Activated CD8-positive, alpha-beta T cell treated with anti-CD3 and anti-CD28 coated beads, Interleukin-2, amount 10 ng/mL, durations not matched to agents 7 days and 5 days (primary cell): ENCODE measurements at regions of chr19 and their contacts with region 1.

Region 1: DNA sequence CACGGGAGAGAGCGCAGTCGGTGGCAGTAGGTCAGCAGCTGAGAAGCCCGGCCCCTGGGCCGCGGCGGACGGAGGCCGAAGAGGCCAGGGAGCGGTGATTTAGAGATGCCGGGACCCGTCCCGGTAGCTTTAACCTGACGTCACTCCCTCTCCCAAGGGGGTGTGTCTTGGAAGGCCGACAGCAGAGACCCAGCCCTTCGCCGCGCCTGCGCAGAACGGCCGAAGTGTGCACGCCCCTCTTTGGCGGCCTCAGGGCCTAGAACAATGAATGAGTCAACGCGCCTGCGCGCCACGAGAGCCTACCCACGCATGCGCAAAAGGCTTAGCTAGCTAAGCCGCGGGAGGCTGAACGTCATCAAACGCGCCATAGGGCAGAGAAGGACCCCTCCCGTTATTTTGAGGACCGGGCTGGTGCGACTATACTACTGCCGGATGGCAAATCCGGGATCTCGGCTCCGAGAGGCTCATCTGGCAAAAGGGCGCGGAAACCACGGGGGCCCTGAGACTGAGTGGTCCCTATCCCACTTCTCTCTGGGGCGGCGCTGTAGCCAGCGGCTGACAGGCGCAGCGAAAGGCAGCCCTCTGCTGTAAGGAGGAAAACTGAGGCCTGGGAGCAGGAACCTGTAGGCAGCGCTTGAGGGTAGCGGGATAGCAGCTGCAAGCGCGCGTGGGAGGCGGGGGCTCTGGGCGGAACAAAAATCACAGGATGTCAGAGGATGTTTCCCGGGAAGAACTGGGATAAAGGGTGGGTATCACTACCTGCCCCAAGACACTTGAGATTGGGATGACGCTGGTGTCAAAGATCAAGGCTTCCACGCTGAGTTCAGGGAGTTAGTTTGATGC is at the starts of genes IRGQ and ZNF576:
- DNase-seq: peak; percentile 100
- ATAC-seq: peak; percentile 82
- H3K4me3 Mint-ChIP-seq: peak within 1 kb of the TSS; percentile 98
- H3K27ac Mint-ChIP-seq: peak within 1 kb of the TSS; percentile 99
- H3K4me1 Mint-ChIP-seq: peaks cover 37% of the 10 kb centered on the region
- H3K27me3 Mint-ChIP-seq: no peaks in the 10 kb centered on the region
- total RNA-seq, gene IRGQ: 11.2 to 14.0 TPM
- total RNA-seq, gene ZNF576: 14.1 to 17.3 TPM

Region 2: DNA sequence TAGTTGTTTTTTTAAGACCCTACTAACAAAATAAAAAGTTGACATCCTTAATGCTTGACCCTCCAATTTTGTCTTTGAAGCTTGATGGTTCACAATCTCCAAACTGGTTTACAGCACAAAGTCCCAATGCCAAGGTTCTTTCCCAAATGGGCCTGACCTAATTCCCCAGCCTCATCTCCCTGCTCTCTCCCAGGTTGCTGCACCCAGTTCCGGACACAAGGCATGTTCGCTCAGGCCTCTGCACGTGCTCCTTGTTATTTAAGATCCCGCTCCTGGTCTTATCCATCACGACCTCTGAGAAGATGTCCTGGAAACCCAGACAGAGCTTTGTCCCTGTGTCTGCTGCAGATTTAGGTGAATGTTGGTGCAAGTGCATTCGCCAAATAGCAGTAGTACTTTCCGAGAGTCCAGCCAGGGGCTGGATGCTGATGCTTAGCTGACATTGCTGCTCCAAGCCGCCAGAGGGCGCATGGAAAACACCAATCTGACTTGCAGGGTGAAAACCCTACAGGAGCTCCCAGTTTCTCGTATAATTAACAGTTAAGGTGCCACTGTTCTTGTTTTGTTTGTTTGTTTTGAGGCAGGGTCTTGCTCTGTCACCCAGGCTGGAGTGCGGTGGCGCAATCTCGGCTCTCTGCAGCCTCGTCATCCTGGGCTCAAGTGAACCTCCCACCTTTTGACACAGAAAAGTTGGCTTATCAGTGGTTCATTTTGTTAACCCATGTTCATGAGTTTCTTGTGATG is 149.3 kb before region 1 on chr19:
- CTCF ChIA-PET with region 1: interaction called, 50 read pairs
- POLR2A ChIA-PET with region 1: interaction called, 5 read pairs
- DNase-seq: peak; percentile 85
- ATAC-seq: peak; percentile 88
- H3K4me3 Mint-ChIP-seq: no peak overlapping the region
- H3K27ac Mint-ChIP-seq: peak overlapping the region; percentile 18
- H3K4me1 Mint-ChIP-seq: peaks cover 25% of the 10 kb centered on the region
- H3K27me3 Mint-ChIP-seq: no peaks in the 10 kb centered on the region

Region 3: DNA sequence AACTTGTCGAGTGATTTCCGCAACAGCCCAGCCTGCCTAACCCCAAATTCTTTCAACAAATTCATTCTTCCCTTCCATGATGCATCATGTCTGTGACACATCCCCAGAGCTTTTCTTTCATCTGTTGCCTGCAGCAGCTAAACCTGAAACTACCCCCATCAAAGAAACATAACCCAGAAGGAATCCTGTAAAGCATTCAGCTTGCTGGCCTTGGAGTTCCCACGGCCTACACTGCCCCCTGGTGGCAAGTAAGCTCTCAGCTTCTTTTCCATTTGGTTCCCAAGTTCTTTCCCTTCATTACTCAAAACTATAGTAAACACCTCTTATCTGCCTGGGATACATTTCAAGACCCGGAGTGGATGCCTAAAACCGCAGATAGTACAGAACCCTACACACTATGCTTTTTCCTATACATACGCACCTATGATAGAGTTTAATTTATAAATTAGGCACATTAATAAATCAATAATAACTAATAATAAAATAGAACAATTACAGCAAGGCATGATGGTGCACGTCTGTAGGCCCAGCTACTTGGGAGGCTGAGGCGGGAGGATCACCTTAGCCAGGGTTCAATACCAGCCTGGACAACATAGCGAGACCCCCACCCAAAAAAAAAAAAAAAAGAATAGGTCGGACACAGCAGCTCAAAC is 76.7 kb before region 1 on chr19:
- CTCF ChIA-PET with region 1: interaction called, 32 read pairs
- POLR2A ChIA-PET with region 1: interaction called, 4 read pairs
- DNase-seq: peak; percentile 83
- ATAC-seq: peak; percentile 71
- H3K4me3 Mint-ChIP-seq: no peak overlapping the region
- H3K27ac Mint-ChIP-seq: peak overlapping the region; percentile 7
- H3K4me1 Mint-ChIP-seq: peaks cover 14% of the 10 kb centered on the region
- H3K27me3 Mint-ChIP-seq: no peaks in the 10 kb centered on the region

Region 4: DNA sequence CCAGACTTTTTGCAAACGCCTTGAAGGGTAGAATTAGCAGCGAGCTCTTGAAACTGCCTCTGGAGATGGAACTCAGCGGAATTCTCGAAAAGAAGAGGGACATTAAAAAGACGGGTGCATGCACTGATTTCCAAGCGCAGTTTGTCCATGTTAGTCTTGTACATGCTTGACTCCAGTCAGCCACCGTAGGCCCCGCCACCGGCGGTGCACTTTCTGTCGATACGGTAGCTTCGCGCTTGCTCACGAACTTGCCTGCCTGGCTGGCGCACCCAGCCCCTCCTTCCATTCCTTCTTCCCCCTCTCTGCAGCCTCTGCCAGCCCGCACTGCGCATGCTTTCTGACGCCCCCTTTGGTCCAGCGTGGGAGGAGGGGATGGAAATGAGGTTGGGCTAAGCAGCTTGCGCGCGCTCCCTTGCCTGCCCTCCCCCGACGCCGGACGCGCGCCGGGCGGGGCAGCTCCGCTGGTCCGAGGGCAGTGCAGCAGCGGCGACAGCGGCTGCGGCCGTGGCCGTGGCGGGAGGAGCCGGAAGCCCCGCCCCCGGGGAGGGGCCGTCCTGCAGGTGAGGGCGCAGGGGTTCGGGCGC is 63.2 kb before region 1 on chr19 and contains the start of gene ZNF575:
- CTCF ChIA-PET with region 1: interaction called, 88 read pairs
- POLR2A ChIA-PET with region 1: interaction called, 13 read pairs
- DNase-seq: peak; percentile 91
- ATAC-seq: peak; percentile 66
- H3K4me3 Mint-ChIP-seq: peak within 1 kb of the TSS; percentile 87
- H3K27ac Mint-ChIP-seq: peak within 1 kb of the TSS; percentile 98
- H3K4me1 Mint-ChIP-seq: peaks cover 27% of the 10 kb centered on the region
- H3K27me3 Mint-ChIP-seq: no peaks in the 10 kb centered on the region
- total RNA-seq, gene ZNF575: 3.4 to 3.7 TPM

Region 5: DNA sequence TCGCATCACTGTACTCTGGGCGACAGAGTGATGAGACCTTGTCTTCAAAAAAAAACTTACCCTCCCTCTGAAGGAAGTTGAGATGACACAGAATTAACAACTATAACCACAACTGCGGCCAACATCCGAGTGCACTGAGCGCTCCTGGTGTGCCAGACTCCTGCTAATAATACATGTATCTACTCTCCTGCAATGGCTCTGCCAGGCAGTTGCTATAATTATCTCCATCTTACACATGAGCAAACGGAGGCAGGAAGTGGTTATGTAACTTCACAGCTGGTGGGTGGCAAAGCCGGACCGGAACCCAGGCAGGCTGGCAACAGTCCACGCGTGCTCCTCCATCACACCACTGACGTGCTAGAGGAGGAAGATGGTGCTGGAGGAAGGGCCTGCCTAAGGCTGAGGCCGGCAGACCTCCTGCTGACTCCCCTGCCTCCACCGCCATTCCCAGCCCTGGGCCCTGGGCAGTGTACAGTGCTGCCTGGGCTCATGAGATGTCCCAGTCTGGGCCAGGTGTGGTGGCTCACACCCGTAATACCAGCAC is 33.5 kb before region 1 on chr19:
- CTCF ChIA-PET with region 1: interaction called, 239 read pairs
- POLR2A ChIA-PET with region 1: interaction called, 7 read pairs
- DNase-seq: peak; percentile 87
- ATAC-seq: peak; percentile 92
- H3K4me3 Mint-ChIP-seq: peak overlapping the region; percentile 46
- H3K27ac Mint-ChIP-seq: peak overlapping the region; percentile 97
- H3K4me1 Mint-ChIP-seq: peaks cover 43% of the 10 kb centered on the region
- H3K27me3 Mint-ChIP-seq: no peaks in the 10 kb centered on the region

Region 6: DNA sequence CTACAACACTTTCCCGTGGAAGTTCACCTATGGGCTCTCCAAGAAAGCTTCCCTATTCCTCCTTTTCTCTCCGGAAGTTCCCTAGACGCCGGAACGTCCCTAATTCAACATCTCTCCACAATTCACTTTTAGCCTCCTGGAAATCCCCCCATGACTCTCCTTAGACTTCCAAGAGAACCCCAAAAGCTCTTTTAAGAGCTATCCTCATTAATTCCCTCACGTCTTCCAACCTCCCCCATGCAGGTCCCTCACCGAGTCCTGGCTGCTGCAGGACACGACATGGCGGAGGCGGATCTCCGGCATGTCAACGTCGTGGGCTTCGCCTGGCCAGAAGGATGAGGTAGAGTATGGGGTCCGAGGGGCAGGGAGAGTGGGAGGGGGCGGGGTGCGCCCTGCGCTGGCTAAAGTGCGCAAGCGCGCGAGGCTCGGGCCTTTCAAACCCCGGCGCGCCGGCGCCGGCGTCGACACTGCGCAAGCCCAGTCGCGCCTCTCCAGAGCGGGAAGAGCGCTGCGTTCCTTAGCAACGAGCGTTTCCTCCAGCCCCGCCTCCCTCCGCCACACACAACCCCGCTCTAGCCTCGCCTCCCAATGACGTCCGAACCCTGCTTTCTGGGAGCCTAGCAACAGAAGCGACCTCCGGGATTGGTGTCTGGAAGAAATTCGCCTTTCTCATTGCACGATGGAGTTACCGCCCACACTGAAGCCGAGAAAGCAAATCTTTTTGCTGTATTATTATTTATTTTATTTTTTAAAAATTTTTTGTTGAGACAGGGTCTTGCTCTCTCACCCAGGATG is 20.9 kb before region 1 on chr19 and contains the starts of genes PINLYP and XRCC1:
- CTCF ChIA-PET with region 1: interaction called, 88 read pairs
- POLR2A ChIA-PET with region 1: interaction called, 44 read pairs
- DNase-seq: peak; percentile 99
- ATAC-seq: peak; percentile 96
- H3K4me3 Mint-ChIP-seq: peak within 1 kb of the TSS; percentile 96
- H3K27ac Mint-ChIP-seq: peak within 1 kb of the TSS; percentile 93
- H3K4me1 Mint-ChIP-seq: peaks cover 45% of the 10 kb centered on the region
- H3K27me3 Mint-ChIP-seq: no peaks in the 10 kb centered on the region
- total RNA-seq, gene PINLYP: 7.4 to 8.9 TPM
- total RNA-seq, gene XRCC1: 46.5 to 48.4 TPM

Region 7: GRCh38 chr19:43668406-43669158 is 72.4 kb after region 1 on chr19:
- CTCF ChIA-PET with region 1: interaction called, 11 read pairs
- POLR2A ChIA-PET with region 1: no interaction called
- DNase-seq: peak; percentile 98
- ATAC-seq: peak; percentile 92
- H3K4me3 Mint-ChIP-seq: peak overlapping the region; percentile 79
- H3K27ac Mint-ChIP-seq: peak overlapping the region; percentile 77
- H3K4me1 Mint-ChIP-seq: peaks cover 47% of the 10 kb centered on the region
- H3K27me3 Mint-ChIP-seq: peaks cover 8% of the 10 kb centered on the region

Region 8: GRCh38 chr19:43700395-43701000 is 104.3 kb after region 1 on chr19:
- CTCF ChIA-PET with region 1: no interaction called
- POLR2A ChIA-PET with region 1: no interaction called
- DNase-seq: no peak
- ATAC-seq: no peak
- H3K4me3 Mint-ChIP-seq: peak overlapping the region; percentile 70
- H3K27ac Mint-ChIP-seq: peak overlapping the region; percentile 68
- H3K4me1 Mint-ChIP-seq: peaks cover 20% of the 10 kb centered on the region
- H3K27me3 Mint-ChIP-seq: peaks cover 13% of the 10 kb centered on the region